ENCODE measurements at regions of chr1 and their contacts with region 1.

Region 1: DNA sequence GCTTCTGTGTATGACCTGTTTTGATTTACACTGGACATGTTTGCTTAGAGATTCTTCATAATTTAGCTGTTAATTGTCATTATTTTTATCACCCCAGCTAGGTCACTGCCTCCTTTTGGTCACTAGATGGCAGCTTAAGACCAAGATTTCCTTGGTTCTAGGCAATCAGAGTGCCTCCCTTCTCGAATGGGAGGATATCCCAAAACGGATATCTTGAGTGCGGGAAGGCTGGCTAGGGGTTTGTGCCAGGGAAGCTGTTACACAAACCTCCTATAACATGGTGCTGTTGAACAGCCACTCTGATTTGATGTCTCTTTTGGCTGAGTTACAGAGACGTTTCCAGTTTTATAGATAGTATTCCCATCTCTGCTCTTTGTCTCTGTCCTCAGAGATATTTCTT is 283.5 kb downstream of the S1PR1 start:
- DNase-seq: peak; percentile 32
- ATAC-seq: peak; percentile 91
- H3K4me3 ChIP-seq: no peak overlapping the region
- H3K27ac ChIP-seq: no peak overlapping the region
- H3K4me1 ChIP-seq: no peaks in the 10 kb centered on the region
- H3K27me3 ChIP-seq: no peaks in the 10 kb centered on the region
- CTCF ChIP-seq: peak; percentile 36 to 81 (median 73); a peak in 5 of 6 replicates
- POLR2A ChIP-seq: no peak
- RAD21 ChIP-seq: peak; percentile 71

Region 2: DNA sequence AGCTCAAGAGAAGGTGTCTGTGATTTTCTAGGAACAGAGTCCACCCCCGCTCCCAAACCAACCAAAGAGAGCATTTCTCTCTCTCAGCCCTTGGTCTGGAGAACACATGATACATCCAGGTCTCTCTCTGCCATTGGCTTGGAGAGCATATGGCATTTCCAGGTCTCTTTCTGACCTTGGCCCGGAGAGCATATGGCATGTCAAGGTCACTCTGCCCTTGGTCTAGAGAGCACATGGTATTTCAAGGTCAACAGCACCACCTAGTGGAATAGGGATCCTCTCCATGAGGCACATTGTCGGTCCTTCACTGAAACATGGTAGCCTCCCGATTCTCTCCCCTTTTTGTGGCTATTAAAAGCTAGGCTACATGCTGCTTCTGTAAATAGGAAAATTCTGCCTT is 914.1 kb after region 1 on chr1:
- CTCF ChIA-PET with region 1: interaction called, 3 read pairs
- POLR2A ChIA-PET with region 1: no interaction called
- RAD21 ChIA-PET with region 1: no interaction called
- intact Hi-C with region 1: loop called (anchors 10 kb)
- DNase-seq: peak; percentile 10
- ATAC-seq: peak; percentile 42; the same call in 1 of the 2 replicates
- H3K4me3 ChIP-seq: no peak overlapping the region
- H3K27ac ChIP-seq: no peak overlapping the region
- H3K4me1 ChIP-seq: no peaks in the 10 kb centered on the region
- H3K27me3 ChIP-seq: no peaks in the 10 kb centered on the region
- CTCF ChIP-seq: peak; percentile 10 to 56 (median 41); a peak in 4 of 6 replicates
- POLR2A ChIP-seq: no peak
- RAD21 ChIP-seq: peak; percentile 53

Region 3: DNA sequence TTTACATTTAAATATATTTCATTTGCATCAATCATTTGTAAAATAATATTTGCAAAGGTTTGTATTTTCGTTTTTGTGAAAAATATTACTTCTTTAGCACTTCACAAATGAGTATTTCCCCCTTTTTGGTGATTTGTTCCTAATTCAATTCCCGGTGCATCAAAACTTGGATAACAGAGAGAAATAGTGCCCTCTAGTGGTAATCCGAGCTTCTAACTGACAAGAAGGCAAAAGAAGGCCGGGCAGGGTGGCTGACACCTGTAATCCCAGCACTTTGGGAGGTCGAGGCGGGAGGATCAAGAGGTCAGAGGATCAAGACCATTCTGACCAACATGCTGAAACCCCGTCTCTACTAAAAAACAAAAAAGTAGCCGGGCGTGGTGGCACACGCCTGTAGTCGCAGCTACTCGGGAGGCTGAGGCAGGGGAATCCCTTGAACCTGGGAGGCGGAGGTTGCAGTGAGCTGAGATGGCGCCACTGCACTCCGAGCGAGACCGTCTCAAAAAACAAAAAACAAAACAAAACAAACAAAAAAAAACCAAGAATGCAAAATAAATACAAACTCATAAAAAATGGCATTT is 1450.3 kb after region 1 on chr1:
- CTCF ChIA-PET with region 1: interaction called, 6 read pairs
- POLR2A ChIA-PET with region 1: no interaction called
- RAD21 ChIA-PET with region 1: no interaction called
- intact Hi-C with region 1: loop called (anchors 5 kb)
- DNase-seq: peak; percentile 51
- ATAC-seq: peak; percentile 42; the same call in 1 of the 2 replicates
- H3K4me3 ChIP-seq: no peak overlapping the region
- H3K27ac ChIP-seq: no peak overlapping the region
- H3K4me1 ChIP-seq: no peaks in the 10 kb centered on the region
- H3K27me3 ChIP-seq: no peaks in the 10 kb centered on the region
- CTCF ChIP-seq: peak; percentile 28 to 69 (median 52); a peak in 5 of 6 replicates
- POLR2A ChIP-seq: no peak
- RAD21 ChIP-seq: peak; percentile 57

Region 4: DNA sequence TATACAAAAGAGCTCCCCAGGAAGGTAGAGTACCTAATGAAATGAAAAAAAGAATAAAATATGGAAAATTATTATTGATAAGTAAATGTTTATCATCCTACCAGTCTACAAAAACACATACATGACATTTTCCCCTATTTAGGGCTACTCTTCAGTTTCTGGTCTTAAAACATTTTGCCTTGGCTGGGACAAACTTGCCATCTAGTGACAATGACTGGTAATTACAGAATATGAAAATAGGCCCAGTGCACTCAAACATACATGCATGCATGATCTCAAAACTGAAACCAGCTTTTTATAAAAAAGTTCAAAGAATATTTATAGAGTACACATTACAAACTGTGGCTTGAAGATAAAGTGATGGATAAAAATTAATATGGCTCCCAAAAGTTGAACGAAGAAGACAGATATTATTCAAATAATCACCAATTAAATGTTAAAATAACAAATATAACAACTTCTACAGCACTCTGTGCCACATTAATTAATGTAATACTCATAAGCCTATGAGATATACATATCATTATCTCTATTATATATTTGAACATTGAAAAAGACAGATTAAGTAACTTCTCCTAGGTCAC is 1994.7 kb after region 1 on chr1:
- CTCF ChIA-PET with region 1: interaction called, 3 read pairs
- POLR2A ChIA-PET with region 1: no interaction called
- RAD21 ChIA-PET with region 1: interaction called in 1 of 2 experiments, 3 read pairs
- intact Hi-C with region 1: loop called (anchors 2 kb)
- DNase-seq: peak; percentile 35
- ATAC-seq: no peak
- H3K4me3 ChIP-seq: no peak overlapping the region
- H3K27ac ChIP-seq: no peak overlapping the region
- H3K4me1 ChIP-seq: no peaks in the 10 kb centered on the region
- H3K27me3 ChIP-seq: no peaks in the 10 kb centered on the region
- CTCF ChIP-seq: peak; percentile 38 to 68 (median 53); a peak in 5 of 6 replicates
- POLR2A ChIP-seq: no peak
- RAD21 ChIP-seq: peak; percentile 68